Transverse colon (tissue), 4 donors: ENCODE measurements at regions of chr16 and their contacts with region 1.

Region 1: GRCh38 chr16:54219709-54220108 is 66.9 kb downstream of the IRX3 start:
- DNase-seq: no peak
- H3K4me3 ChIP-seq: no peak overlapping the region
- H3K27ac ChIP-seq: no peak overlapping the region
- H3K4me1 ChIP-seq: no peaks in the 10 kb centered on the region
- H3K27me3 ChIP-seq: peaks cover 13% of the 10 kb centered on the region
- CTCF ChIP-seq: no peak
- EP300 ChIP-seq: no peak
- POLR2A ChIP-seq: no peak

Region 2: GRCh38 chr16:52512297-52512987 is 1707.3 kb before region 1 on chr16:
- in situ Hi-C with region 1: no loop called
- intact Hi-C with region 1: loop called (anchors 5 kb)
- DNase-seq: no peak
- H3K4me3 ChIP-seq: no peak overlapping the region
- H3K27ac ChIP-seq: no peak overlapping the region
- H3K4me1 ChIP-seq: peaks cover 0 to 7% (median 0%) of the 10 kb centered on the region in 4 donors
- H3K27me3 ChIP-seq: no peaks in the 10 kb centered on the region
- CTCF ChIP-seq: no peak
- EP300 ChIP-seq: no peak
- POLR2A ChIP-seq: no peak

Region 3: GRCh38 chr16:54176376-54176901 is 43.3 kb before region 1 on chr16:
- in situ Hi-C with region 1: no loop called
- intact Hi-C with region 1: no loop called
- DNase-seq: no peak
- H3K4me3 ChIP-seq: no peak overlapping the region
- H3K27ac ChIP-seq: no peak overlapping the region
- H3K4me1 ChIP-seq: peaks cover 0 to 12% (median 0%) of the 10 kb centered on the region in 4 donors
- H3K27me3 ChIP-seq: peaks cover 53% of the 10 kb centered on the region
- CTCF ChIP-seq: no peak
- EP300 ChIP-seq: no peak
- POLR2A ChIP-seq: no peak